ENCODE measurements at regions of chr2 and their contacts with region 1.

Region 1: DNA sequence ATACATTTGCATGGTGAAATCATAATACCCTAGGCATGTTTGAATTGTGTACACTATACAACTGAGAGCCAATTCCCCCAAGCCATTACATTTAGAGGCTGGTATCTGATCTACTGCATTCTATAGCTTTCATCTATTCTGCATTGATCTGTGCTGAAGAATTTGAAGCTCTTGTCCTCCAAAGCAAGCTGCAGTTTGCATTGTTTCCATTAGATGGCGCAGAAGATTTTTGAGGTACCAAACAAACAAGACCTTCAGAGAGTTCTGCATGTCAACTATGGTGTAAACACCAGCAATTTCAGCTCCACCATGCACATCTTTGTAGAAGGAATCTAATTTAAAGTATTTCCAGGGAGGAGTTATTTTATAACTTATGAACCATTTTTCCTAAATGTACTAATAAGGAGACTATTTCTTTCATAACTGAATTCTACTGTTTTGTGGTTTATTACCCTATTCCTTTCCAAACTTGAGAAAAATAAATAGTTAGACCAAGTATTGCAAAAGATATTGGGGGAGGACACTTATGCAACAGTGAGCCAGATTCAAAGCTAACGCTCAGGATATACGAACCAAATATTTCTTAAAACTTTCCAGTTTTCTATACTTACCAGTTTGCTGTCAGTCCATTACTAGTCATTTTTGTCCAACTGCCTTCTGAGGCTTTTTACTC is 761.8 kb upstream of the ACVR2A start:
- DNase-seq: peak in 5 of 10 donors; percentile 33 to 64 (median 40)
- H3K4me3 ChIP-seq: no peak overlapping the region
- H3K27ac ChIP-seq: peak overlapping the region in 7 of 59 donors; percentile 1 to 50 (median 5)
- H3K27me3 ChIP-seq: no peaks in the 10 kb centered on the region
- CTCF ChIP-seq: peak; percentile 76 to 98 (median 92)

Region 2: DNA sequence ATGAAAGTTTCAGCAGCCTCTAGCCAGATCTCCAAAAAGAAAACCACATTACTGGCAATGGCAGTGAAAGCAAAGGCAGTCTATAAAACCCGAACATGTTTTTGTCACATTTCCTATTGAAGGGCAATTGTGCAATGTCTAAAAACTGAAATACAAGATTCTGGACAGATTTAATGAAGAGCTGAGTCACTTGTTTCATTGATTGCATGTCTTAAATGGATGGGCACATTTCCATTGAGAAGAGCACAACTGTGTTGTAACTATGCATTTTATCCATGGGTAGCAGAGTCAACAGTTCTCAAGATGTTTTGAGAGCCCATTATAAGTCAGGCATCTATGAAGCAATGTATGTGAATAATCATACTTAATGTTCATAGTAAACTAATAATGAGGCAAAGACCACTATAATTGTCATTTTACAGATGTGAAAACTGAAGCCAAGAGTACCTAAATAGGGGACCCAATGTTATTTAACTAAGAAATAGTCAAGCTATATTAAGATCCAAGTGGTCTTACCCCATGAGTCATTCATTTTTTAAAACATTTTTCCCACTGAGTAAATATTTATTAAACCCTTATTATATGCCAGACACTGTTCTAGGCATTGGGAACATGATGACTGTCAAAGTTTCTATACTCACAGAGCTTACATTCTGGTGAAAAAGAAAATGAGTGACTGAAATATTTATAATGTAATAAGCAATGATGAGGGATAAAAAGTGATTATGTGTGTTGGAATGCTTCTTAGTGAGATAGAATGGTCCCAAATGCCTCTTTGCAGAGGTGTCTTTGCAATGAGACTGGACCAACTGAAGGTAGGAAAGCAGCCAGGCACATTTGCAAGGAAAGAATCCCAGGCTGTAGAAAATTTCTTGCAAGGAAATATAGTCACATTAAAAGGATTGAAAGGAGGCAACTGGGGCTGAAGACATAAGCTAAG is 57.1 kb before region 1 on chr2:
- intact Hi-C with region 1: no loop called
- DNase-seq: no peak
- H3K4me3 ChIP-seq: no peak overlapping the region
- H3K27ac ChIP-seq: no peak overlapping the region
- H3K27me3 ChIP-seq: peaks cover 0 to 8% (median 0%) of the 10 kb centered on the region in 45 donors
- CTCF ChIP-seq: no peak

Region 3: DNA sequence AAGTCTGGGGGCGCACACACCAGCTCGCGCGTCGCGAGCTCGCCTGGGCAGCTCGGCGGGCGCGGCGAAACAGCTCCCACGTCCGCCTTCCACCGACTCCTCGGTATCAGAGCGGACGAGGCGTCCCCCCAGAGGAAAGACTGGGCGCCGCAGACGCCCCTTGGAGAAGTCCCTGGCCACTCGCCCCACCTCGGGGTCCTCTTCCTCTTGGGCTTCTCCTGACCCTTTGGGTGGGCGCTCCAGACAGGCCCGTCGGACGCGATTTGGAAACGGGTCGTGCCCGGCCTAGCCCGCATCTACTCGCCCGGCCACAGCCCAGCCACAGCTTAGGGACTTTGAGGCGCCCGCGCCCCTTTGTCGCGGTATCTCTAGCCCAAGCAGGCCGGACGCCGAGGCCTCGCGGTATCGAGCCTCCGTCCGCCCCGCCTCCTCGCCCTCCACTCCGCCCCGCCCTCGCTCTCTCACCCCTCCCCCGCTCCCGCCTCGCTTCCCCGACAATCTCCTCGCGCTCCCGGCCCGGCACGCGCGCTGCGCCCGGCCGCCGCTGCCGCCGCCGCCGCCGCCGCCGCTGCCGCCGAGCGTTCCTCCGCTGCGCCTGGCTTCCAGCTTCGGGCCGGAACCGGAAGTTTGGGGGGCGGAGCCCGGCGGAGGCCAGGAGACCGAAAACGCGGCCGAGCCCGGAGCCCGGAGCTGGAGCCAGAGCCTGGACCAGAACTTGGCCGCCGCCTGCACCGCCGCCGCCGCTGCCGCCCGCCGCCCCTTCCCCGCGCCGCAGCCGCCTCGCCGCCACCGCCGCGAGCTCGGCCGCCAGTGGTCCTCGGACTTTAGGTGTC is 761.1 kb after region 1 on chr2:
- intact Hi-C with region 1: loop called in 1 of 2 experiments (anchors 10 kb)
- DNase-seq: peak; percentile 74 to 94 (median 88)
- H3K4me3 ChIP-seq: peak overlapping the region; percentile 63 to 96 (median 84)
- H3K27ac ChIP-seq: peak overlapping the region; percentile 79 to 99 (median 97)
- H3K27me3 ChIP-seq: no peaks in the 10 kb centered on the region
- CTCF ChIP-seq: peak in 34 of 56 donors; percentile 8 to 48 (median 30)